CD8-positive, alpha-beta T cell (primary cell): ENCODE measurements at regions of chr1 and their contacts with region 1.

Region 1: GRCh38 chr1:11645670-11646265 is 8.5 kb downstream of the FBXO2 start:
- DNase-seq: peak; percentile 57 to 85 (median 81)
- ATAC-seq: peak; percentile 47
- H3K4me3 ChIP-seq: no peak overlapping the region
- H3K4me3 Mint-ChIP-seq: no peak overlapping the region
- H3K27ac ChIP-seq: no peak overlapping the region
- H3K27ac Mint-ChIP-seq: no peak overlapping the region
- H3K4me1 ChIP-seq: peaks cover 17% of the 10 kb centered on the region
- H3K4me1 Mint-ChIP-seq: peaks cover 15% of the 10 kb centered on the region
- H3K27me3 ChIP-seq: no peaks in the 10 kb centered on the region
- H3K27me3 Mint-ChIP-seq: no peaks in the 10 kb centered on the region
- CTCF ChIP-seq: peak; percentile 85

Region 2: GRCh38 chr1:11248155-11248554 is 397.6 kb before region 1 on chr1:
- CTCF ChIA-PET with region 1: interaction called, 80 read pairs
- POLR2A ChIA-PET with region 1: no interaction called
- intact Hi-C with region 1: no loop called
- DNase-seq: no peak
- ATAC-seq: no peak
- H3K4me3 ChIP-seq: no peak overlapping the region
- H3K4me3 Mint-ChIP-seq: no peak overlapping the region
- H3K27ac ChIP-seq: no peak overlapping the region
- H3K27ac Mint-ChIP-seq: peak overlapping the region; percentile 45
- H3K4me1 ChIP-seq: no peaks in the 10 kb centered on the region
- H3K4me1 Mint-ChIP-seq: peaks cover 12% of the 10 kb centered on the region
- H3K27me3 ChIP-seq: no peaks in the 10 kb centered on the region
- H3K27me3 Mint-ChIP-seq: no peaks in the 10 kb centered on the region
- CTCF ChIP-seq: no peak

Region 3: GRCh38 chr1:11337580-11338073 is 308.1 kb before region 1 on chr1:
- CTCF ChIA-PET with region 1: interaction called, 16 read pairs
- POLR2A ChIA-PET with region 1: no interaction called
- intact Hi-C with region 1: loop called (anchors 1 kb)
- DNase-seq: peak; percentile 47 to 85 (median 70)
- ATAC-seq: peak; percentile 74
- H3K4me3 ChIP-seq: no peak overlapping the region
- H3K4me3 Mint-ChIP-seq: no peak overlapping the region
- H3K27ac ChIP-seq: no peak overlapping the region
- H3K27ac Mint-ChIP-seq: no peak overlapping the region
- H3K4me1 ChIP-seq: peaks cover 6% of the 10 kb centered on the region
- H3K4me1 Mint-ChIP-seq: peaks cover 13% of the 10 kb centered on the region
- H3K27me3 ChIP-seq: no peaks in the 10 kb centered on the region
- H3K27me3 Mint-ChIP-seq: peaks cover 11% of the 10 kb centered on the region
- CTCF ChIP-seq: peak; percentile 83

Region 4: DNA sequence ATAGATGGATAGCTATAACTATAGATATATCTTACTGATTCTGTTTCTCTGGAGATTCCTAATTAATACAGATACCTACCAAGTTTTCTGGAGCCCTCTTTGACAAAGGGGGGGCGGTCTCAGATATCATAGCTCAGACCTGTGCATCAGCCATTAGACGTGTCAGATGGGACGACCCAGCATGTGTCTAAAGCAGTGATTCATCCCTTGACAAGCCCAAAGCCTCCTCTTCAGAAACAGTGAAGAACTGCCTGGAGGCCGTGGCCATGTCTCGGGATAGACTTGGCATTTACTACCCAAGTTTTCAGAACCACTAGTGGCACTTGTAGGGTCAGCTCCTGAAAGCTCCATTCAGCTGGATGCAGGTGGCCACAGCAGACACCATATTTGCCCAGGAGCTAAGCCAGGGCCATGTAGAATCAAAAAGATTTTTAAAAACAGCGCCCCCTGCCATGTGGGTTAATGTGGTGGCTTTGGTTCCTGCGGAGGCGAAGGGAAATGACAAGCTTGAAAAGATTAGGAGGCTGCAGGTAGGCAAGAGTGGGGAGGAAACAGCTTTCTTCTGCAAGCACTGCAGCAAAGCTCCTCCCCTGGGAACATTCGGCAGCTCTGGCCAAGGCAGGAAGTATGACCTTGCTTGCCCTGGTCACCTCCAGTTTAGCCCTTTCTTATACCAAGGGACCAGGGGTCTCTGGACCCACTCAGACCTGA is 73.7 kb before region 1 on chr1:
- CTCF ChIA-PET with region 1: no interaction called
- POLR2A ChIA-PET with region 1: no interaction called
- intact Hi-C with region 1: no loop called
- DNase-seq: peak in 2 of 9 experiments; percentile 9 to 14
- ATAC-seq: no peak
- H3K4me3 ChIP-seq: no peak overlapping the region
- H3K4me3 Mint-ChIP-seq: no peak overlapping the region
- H3K27ac ChIP-seq: no peak overlapping the region
- H3K27ac Mint-ChIP-seq: no peak overlapping the region
- H3K4me1 ChIP-seq: no peaks in the 10 kb centered on the region
- H3K4me1 Mint-ChIP-seq: peaks cover 3% of the 10 kb centered on the region
- H3K27me3 ChIP-seq: peaks cover 2 to 5% of the 10 kb centered on the region in 2 experiments
- H3K27me3 Mint-ChIP-seq: peaks cover 21% of the 10 kb centered on the region
- CTCF ChIP-seq: no peak

Region 5: GRCh38 chr1:11634365-11635192 is 11.2 kb before region 1 on chr1:
- CTCF ChIA-PET with region 1: interaction called, 14 read pairs
- POLR2A ChIA-PET with region 1: no interaction called
- intact Hi-C with region 1: no loop called
- DNase-seq: no peak
- ATAC-seq: no peak
- H3K4me3 ChIP-seq: no peak overlapping the region
- H3K4me3 Mint-ChIP-seq: no peak overlapping the region
- H3K27ac ChIP-seq: no peak overlapping the region
- H3K27ac Mint-ChIP-seq: no peak overlapping the region
- H3K4me1 ChIP-seq: no peaks in the 10 kb centered on the region
- H3K4me1 Mint-ChIP-seq: no peaks in the 10 kb centered on the region
- H3K27me3 ChIP-seq: peaks cover 0 to 2% of the 10 kb centered on the region in 2 experiments
- H3K27me3 Mint-ChIP-seq: peaks cover 24% of the 10 kb centered on the region
- CTCF ChIP-seq: no peak

Region 6: DNA sequence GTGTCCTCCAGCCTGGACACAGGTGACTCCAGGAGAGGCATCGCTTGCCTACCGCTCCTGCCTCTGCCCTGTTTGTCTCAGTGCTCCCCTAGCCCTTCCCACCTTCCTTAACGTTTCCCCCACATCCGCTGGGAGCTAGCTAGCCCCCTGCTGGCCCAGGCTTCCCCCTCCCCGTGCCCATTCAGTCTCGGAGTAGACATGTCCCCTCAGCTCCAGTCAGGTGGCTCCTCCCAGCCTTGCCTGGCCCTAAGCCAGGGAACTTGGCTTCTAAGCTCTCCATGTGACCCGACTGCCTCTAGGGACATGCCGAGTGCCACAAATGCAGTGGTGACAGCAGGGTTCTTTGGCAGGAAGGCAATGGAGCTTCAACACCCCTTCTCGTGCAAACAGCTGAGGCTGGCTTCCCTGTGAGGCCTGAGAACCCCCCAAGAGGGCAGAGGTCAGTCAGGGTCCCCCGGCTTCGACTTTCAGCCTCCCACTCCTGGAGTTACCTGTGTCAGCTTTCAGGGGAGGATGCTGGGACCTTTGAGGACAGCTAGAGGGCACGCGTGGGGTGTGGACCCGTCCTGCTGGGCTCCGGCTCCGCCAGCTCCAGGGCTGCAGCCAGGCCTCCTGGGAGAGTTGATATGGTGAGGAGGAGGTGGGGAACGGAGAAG is 62.0 kb after region 1 on chr1:
- CTCF ChIA-PET with region 1: interaction called, 14 read pairs
- POLR2A ChIA-PET with region 1: no interaction called
- intact Hi-C with region 1: no loop called
- DNase-seq: no peak
- ATAC-seq: no peak
- H3K4me3 ChIP-seq: no peak overlapping the region
- H3K4me3 Mint-ChIP-seq: no peak overlapping the region
- H3K27ac ChIP-seq: no peak overlapping the region
- H3K27ac Mint-ChIP-seq: no peak overlapping the region
- H3K4me1 ChIP-seq: no peaks in the 10 kb centered on the region
- H3K4me1 Mint-ChIP-seq: no peaks in the 10 kb centered on the region
- H3K27me3 ChIP-seq: no peaks in the 10 kb centered on the region
- H3K27me3 Mint-ChIP-seq: no peaks in the 10 kb centered on the region
- CTCF ChIP-seq: no peak